PC-9 (cell line): ENCODE measurements at regions of chr9 and their contacts with region 1.

Region 1: DNA sequence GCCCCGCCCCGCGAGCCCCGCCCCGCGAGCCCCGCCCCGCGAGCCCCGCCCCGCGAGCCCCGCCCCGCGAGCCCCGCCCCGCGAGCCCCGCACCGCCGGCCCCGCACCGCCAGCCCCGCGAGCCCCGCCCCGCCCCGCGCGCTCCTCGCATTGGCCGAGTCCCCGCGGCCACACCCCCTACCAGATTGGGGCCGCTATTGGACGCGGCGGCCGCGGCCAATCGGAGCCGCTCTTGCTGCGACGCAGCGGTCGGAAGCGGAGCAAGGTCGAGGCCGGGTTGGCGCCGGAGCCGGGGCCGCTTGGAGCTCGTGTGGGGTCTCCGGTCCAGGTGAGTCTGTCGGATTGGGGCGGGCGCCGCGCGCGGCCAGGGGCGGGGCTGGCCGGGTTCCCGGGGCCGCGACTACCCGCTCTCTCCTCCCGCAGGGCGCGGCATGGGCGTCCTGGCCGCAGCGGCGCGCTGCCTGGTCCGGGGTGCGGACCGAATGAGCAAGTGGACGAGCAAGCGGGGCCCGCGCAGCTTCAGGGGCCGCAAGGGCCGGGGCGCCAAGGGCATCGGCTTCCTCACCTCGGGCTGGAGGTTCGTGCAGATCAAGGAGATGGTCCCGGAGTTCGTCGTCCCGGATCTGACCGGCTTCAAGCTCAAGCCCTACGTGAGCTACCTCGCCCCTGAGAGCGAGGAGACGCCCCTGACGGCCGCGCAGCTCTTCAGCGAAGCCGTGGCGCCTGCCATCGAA is at the start of gene MRPL41:
- DNase-seq: peak; percentile 79 to 96
- H3K4me3 ChIP-seq: peak within 1 kb of the TSS; percentile 82
- H3K27ac ChIP-seq: no peak within 1 kb of the TSS
- H3K4me1 ChIP-seq: peaks cover 8% of the 10 kb centered on the region
- H3K27me3 ChIP-seq: no peaks in the 10 kb centered on the region
- CTCF ChIP-seq: no peak
- total RNA-seq, gene MRPL41: 54.5 and 87.7 TPM in 2 replicates

Region 2: GRCh38 chr9:137294091-137294683 is 257.6 kb before region 1 on chr9:
- CTCF ChIA-PET with region 1: no interaction called
- POLR2A ChIA-PET with region 1: interaction called, 24 read pairs
- intact Hi-C with region 1: loop called (anchors 1 kb)
- DNase-seq: peak; percentile 54 to 69
- H3K4me3 ChIP-seq: no peak overlapping the region
- H3K27ac ChIP-seq: no peak overlapping the region
- H3K4me1 ChIP-seq: no peaks in the 10 kb centered on the region
- H3K27me3 ChIP-seq: no peaks in the 10 kb centered on the region
- CTCF ChIP-seq: no peak

Region 3: DNA sequence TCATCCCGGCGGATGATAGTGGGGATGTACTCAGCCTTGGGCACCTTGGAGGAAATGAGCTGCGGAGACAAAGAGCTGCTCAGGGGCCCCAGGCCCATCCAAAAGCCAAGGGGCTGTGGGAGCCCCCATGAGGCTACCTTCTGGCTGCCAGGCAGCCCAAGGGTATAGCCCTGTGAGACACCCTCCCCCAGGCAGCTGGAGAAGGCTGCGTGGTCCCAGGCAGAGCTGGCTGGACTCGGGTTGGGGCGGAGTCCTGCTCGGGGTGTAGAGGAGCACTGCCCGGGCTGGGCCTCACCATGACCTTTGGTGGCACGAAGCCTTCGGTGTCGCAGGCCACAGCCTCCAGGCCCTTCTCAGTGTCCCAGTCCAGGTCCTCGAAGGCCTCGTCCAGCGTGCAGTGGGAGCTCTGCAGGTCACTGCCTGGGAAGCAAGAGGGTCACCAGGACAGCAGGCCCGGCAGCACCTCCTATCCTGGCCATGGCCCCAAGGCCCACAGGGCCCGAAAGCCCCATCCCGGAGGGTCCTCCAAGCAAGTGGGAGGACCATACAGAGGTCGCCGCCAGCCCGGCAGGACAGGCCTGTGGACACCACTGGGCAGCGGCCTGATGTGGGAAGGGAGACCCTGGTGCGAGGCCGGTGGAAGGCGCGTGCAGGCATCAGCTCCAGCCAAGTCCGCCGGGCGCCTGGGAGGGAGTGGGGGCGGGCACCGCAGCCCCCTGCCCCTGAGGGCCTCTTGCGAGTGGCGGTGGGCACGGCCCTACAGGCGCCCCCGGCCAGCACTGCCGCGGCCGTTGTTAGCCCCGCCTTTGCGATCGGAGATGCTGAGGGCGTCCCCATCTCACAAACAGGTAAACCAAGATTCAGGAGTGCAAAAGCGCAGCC is 98.8 kb before region 1 on chr9:
- CTCF ChIA-PET with region 1: interaction called, 16 read pairs
- POLR2A ChIA-PET with region 1: no interaction called
- intact Hi-C with region 1: no loop called
- DNase-seq: no peak
- H3K4me3 ChIP-seq: no peak overlapping the region
- H3K27ac ChIP-seq: no peak overlapping the region
- H3K4me1 ChIP-seq: no peaks in the 10 kb centered on the region
- H3K27me3 ChIP-seq: no peaks in the 10 kb centered on the region
- CTCF ChIP-seq: no peak

Region 4: GRCh38 chr9:137611623-137612463 is 60.0 kb after region 1 on chr9:
- CTCF ChIA-PET with region 1: no interaction called
- POLR2A ChIA-PET with region 1: no interaction called
- intact Hi-C with region 1: loop called (anchors 5 kb)
- DNase-seq: peak; percentile 99
- H3K4me3 ChIP-seq: peak overlapping the region; percentile 44; the same call in 1 of the 2 replicates
- H3K27ac ChIP-seq: peak overlapping the region; percentile 97
- H3K4me1 ChIP-seq: peaks cover 76% of the 10 kb centered on the region
- H3K27me3 ChIP-seq: no peaks in the 10 kb centered on the region
- CTCF ChIP-seq: no peak